Activated CD4-positive, alpha-beta memory T cell treated with anti-CD3 and anti-CD28 coated beads, Interleukin-2, amount 10 ng/mL, durations not matched to agents 7 days and 5 days (primary cell): ENCODE measurements at regions of chr7 and their contacts with region 1.

Region 1: GRCh38 chr7:22559829-22560489 is 60.0 kb upstream of the STEAP1B start:
- DNase-seq: peak; percentile 78
- H3K4me3 Mint-ChIP-seq: no peak overlapping the region
- H3K27ac Mint-ChIP-seq: no peak overlapping the region
- H3K4me1 Mint-ChIP-seq: peaks cover 47% of the 10 kb centered on the region
- H3K27me3 Mint-ChIP-seq: peaks cover 18% of the 10 kb centered on the region

Region 2: GRCh38 chr7:22356701-22357353 is 203.1 kb before region 1 on chr7 and contains the start of gene RAPGEF5:
- CTCF ChIA-PET with region 1: no interaction called
- POLR2A ChIA-PET with region 1: no interaction called
- DNase-seq: no peak
- H3K4me3 Mint-ChIP-seq: peak within 1 kb of the TSS; percentile 37
- H3K27ac Mint-ChIP-seq: no peak within 1 kb of the TSS
- H3K4me1 Mint-ChIP-seq: peaks cover 5% of the 10 kb centered on the region
- H3K27me3 Mint-ChIP-seq: peaks cover 54% of the 10 kb centered on the region
- total RNA-seq, gene RAPGEF5: 0.43 to 0.93 TPM

Region 3: DNA sequence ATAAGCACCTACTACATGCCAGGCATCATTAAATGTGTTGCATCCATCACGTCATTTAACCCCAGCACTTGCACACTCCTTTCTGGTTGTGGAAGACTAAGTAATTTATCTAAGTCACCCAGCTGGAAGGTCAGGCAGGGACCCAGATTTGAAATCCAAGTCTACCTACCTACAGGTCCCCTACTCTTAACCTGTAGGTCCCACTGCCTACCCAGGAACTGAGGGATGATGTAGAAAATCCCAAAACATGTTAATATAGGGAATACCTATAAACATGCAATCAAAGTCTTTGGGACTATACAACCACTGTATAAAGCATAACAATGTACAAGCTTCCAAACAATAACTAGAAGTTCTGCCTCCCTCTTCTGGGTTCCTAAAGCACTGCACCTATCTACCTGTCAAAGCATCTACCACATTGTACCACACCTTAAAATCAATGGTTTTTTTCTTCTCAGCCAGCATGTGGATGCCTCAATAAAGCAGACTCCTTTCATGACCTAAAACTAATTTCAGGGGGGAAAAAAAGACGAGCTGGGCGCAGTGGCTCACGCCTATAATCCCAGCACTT is 172.7 kb after region 1 on chr7:
- CTCF ChIA-PET with region 1: interaction called, 379 read pairs
- POLR2A ChIA-PET with region 1: interaction called, 48 read pairs
- DNase-seq: no peak
- H3K4me3 Mint-ChIP-seq: no peak overlapping the region
- H3K27ac Mint-ChIP-seq: no peak overlapping the region
- H3K4me1 Mint-ChIP-seq: peaks cover 16% of the 10 kb centered on the region
- H3K27me3 Mint-ChIP-seq: peaks cover 46% of the 10 kb centered on the region

Region 4: GRCh38 chr7:22782616-22783232 is 222.8 kb after region 1 on chr7:
- CTCF ChIA-PET with region 1: interaction called, 118 read pairs
- POLR2A ChIA-PET with region 1: interaction called, 3 read pairs
- DNase-seq: peak; percentile 78
- H3K4me3 Mint-ChIP-seq: no peak overlapping the region
- H3K27ac Mint-ChIP-seq: no peak overlapping the region
- H3K4me1 Mint-ChIP-seq: no peaks in the 10 kb centered on the region
- H3K27me3 Mint-ChIP-seq: peaks cover 13% of the 10 kb centered on the region